Caco-2 (cell line): ENCODE measurements at regions of chr15 and their contacts with region 1.

Region 1: GRCh38 chr15:79989682-79990081 is 18.7 kb upstream of the BCL2A1 start:
- DNase-seq: no peak
- H3K4me3 ChIP-seq: no peak overlapping the region
- H3K4me3 Mint-ChIP-seq: no peak overlapping the region
- H3K27ac Mint-ChIP-seq: no peak overlapping the region
- H3K4me1 ChIP-seq: no peaks in the 10 kb centered on the region
- H3K4me1 Mint-ChIP-seq: no peaks in the 10 kb centered on the region
- H3K27me3 ChIP-seq: no peaks in the 10 kb centered on the region
- H3K27me3 Mint-ChIP-seq: peaks cover 2% of the 10 kb centered on the region
- CTCF ChIP-seq: no peak

Region 2: DNA sequence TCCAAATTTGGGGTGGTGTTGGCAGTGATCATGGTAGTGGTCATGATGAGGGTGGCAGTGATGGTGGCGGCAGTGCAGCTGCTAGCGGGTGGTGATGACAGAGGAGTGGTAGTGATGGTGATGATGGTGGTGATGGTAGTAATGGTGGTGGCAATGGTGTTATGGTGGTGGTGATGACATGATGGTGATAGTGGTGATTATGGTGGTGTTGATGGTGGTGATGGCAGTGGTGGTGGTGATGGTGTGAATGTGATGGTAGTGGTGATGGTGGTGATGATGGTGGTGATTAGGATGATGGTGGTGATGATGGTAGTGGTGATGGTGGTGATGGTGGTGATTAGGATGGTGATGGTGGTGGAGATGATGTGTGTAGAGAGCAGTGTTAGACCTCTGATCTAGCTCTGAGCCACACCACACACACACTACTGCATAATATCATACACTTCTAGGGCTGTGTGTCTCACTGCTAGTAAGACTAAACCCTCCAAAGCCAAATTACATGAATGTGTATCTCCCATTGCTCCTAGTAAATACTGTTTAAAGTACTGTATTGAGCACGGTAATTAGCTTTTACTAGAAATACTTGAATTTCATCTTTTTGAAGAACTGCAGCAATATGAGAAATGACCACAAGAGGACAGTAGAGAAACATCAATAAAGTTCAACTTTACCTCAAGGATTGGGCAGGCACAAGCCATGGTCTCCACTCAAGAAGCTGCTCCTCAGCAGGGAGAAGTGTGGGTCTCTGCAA is 649.9 kb before region 1 on chr15:
- CTCF ChIA-PET with region 1: no interaction called
- POLR2A ChIA-PET with region 1: no interaction called
- intact Hi-C with region 1: loop called (anchors 1 kb)
- DNase-seq: peak in 1 of 2 experiments; percentile 41
- H3K4me3 ChIP-seq: no peak overlapping the region
- H3K4me3 Mint-ChIP-seq: no peak overlapping the region
- H3K27ac Mint-ChIP-seq: no peak overlapping the region
- H3K4me1 ChIP-seq: no peaks in the 10 kb centered on the region
- H3K4me1 Mint-ChIP-seq: no peaks in the 10 kb centered on the region
- H3K27me3 ChIP-seq: no peaks in the 10 kb centered on the region
- H3K27me3 Mint-ChIP-seq: no peaks in the 10 kb centered on the region
- CTCF ChIP-seq: peak; percentile 66 to 78

Region 3: DNA sequence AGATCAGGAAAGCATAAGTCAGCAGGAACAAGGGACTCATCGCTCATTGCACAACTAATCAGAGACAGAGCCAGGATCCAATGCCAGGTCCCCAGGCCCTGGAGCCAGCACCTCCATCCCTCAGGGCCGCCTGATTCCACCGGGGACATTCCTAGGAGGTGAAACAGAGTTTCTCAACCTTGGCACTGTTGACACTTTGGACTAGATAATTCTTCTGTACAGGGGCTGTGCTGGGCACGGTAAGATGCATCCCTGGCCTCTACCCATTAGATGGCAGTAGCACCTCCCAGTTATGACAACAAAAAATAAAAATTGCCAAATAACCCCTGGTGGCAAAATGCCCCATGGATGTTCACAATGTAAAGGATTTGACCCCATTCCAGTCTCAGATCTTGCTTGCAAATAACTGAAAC is 220.6 kb before region 1 on chr15:
- CTCF ChIA-PET with region 1: no interaction called
- POLR2A ChIA-PET with region 1: no interaction called
- intact Hi-C with region 1: loop called (anchors 2 kb)
- DNase-seq: peak in 1 of 2 experiments; percentile 4
- H3K4me3 ChIP-seq: no peak overlapping the region
- H3K4me3 Mint-ChIP-seq: no peak overlapping the region
- H3K27ac Mint-ChIP-seq: no peak overlapping the region
- H3K4me1 ChIP-seq: no peaks in the 10 kb centered on the region
- H3K4me1 Mint-ChIP-seq: no peaks in the 10 kb centered on the region
- H3K27me3 ChIP-seq: no peaks in the 10 kb centered on the region; the same call in 1 of the 2 replicates
- H3K27me3 Mint-ChIP-seq: peaks cover 17% of the 10 kb centered on the region
- CTCF ChIP-seq: no peak

Region 4: GRCh38 chr15:79881254-79881653 is 108.4 kb before region 1 on chr15:
- CTCF ChIA-PET with region 1: no interaction called
- POLR2A ChIA-PET with region 1: no interaction called
- intact Hi-C with region 1: no loop called
- DNase-seq: no peak
- H3K4me3 ChIP-seq: no peak overlapping the region
- H3K4me3 Mint-ChIP-seq: no peak overlapping the region
- H3K27ac Mint-ChIP-seq: no peak overlapping the region
- H3K4me1 ChIP-seq: peaks cover 6% of the 10 kb centered on the region; the same call in 1 of the 2 replicates
- H3K4me1 Mint-ChIP-seq: peaks cover 16% of the 10 kb centered on the region
- H3K27me3 ChIP-seq: no peaks in the 10 kb centered on the region
- H3K27me3 Mint-ChIP-seq: no peaks in the 10 kb centered on the region
- CTCF ChIP-seq: no peak

Region 5: DNA sequence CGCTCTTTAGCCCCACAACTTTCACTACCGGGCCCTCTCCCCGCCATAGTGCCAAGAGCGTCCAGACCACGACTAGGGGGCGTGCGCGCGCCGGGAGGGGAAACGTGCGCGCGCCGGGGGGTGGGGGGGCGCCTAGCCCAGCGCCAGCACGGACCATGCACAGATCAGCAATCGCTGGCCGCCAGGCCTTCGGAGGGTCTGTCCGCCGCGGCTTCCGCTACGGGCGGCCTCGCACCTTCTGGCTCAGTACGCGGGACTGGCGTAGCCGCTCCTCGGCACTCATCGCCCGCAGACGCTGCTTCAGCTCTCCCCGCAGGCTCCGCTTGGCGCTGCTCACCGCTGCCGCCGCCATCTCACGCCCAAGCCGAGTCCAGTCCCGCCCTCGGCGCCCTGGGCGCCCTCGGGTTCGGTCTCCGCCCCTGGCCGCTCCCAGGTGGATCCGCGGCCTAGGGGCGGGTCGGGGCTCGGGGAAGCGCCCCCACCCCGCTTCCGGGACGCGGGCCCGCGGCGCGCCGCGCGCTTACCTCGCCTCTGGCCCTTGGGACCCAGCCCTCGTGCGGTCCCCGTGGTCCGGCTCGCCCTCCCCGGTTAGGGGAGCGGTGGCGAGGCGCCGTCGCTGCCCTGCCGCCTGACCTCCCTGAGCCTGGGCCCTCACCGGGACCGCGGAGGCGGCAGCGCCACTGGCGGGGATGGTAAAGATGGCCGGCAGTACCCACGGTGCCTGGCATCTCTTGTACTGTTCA is 92.9 kb before region 1 on chr15 and contains the start of gene MTHFS:
- CTCF ChIA-PET with region 1: interaction called, 3 read pairs
- POLR2A ChIA-PET with region 1: no interaction called
- intact Hi-C with region 1: loop called (anchors 1 kb)
- DNase-seq: peak; percentile 85 to 89
- H3K4me3 ChIP-seq: peak within 1 kb of the TSS; percentile 87
- H3K4me3 Mint-ChIP-seq: peak within 1 kb of the TSS; percentile 85
- H3K27ac Mint-ChIP-seq: peak within 1 kb of the TSS; percentile 94
- H3K4me1 ChIP-seq: no peaks in the 10 kb centered on the region
- H3K4me1 Mint-ChIP-seq: peaks cover 12% of the 10 kb centered on the region
- H3K27me3 ChIP-seq: no peaks in the 10 kb centered on the region
- H3K27me3 Mint-ChIP-seq: no peaks in the 10 kb centered on the region
- CTCF ChIP-seq: peak in 1 of 2 experiments; percentile 59
- total RNA-seq, gene MTHFS: 45.1 and 48.2 TPM in 2 replicates

Region 6: GRCh38 chr15:79932447-79932846 is 57.2 kb before region 1 on chr15:
- CTCF ChIA-PET with region 1: no interaction called
- POLR2A ChIA-PET with region 1: no interaction called
- intact Hi-C with region 1: loop called (anchors 2 kb)
- DNase-seq: no peak
- H3K4me3 ChIP-seq: no peak overlapping the region
- H3K4me3 Mint-ChIP-seq: no peak overlapping the region
- H3K27ac Mint-ChIP-seq: no peak overlapping the region
- H3K4me1 ChIP-seq: no peaks in the 10 kb centered on the region
- H3K4me1 Mint-ChIP-seq: no peaks in the 10 kb centered on the region
- H3K27me3 ChIP-seq: no peaks in the 10 kb centered on the region
- H3K27me3 Mint-ChIP-seq: peaks cover 6% of the 10 kb centered on the region
- CTCF ChIP-seq: no peak